Sciatic nerve (tissue), 2 donors: ENCODE measurements at regions of chr11 and their contacts with region 1.

Region 1: GRCh38 chr11:27456140-27456794 is 16.3 kb downstream of the LGR4 start:
- DNase-seq: no peak
- ATAC-seq: no peak

Region 2: DNA sequence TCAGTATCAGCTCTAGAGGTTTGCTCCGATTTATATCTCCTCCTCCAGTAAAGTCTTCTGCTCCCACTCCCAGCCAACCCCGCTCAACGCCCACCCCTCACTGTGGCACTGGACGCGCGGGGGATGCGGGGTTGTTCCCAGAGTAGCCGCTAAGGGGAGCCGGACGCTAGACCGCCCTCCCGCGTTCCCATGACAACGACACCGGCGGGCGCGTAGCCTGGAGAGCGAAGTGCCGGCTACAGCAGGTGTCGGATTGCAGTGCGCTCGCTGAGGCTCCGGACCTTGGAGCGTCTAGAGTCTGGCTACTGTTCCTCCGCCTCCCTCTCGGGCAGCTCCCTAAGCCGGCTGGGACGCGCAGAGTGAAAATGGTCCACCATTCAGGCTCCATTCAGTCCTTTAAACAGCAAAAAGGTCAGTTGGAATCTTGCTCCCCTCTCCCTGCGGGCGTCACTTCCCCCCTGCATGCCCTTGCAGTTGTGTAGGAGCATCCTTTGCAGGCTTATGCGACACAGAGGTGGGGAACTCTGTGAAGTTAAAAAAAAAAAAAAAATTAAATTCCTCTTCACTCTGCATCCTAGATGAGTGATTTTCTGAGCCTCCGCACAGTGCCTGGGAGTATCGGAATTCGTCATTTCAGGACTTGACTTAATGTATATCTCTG is 1124.2 kb before region 1 on chr11 and contains the start of gene ANO3:
- intact Hi-C with region 1: loop called (anchors 10 kb)
- DNase-seq: peak; percentile 72
- ATAC-seq: peak; percentile 84
- total RNA-seq, gene ANO3: 0.76 TPM